Activated naive CD4-positive, alpha-beta T cell treated with anti-CD3 and anti-CD28 coated beads for 36 hours (primary cell): ENCODE measurements at regions of chr19 and their contacts with region 1.

Region 1: GRCh38 chr19:38899447-38900219 is at the starts of genes NFKBIB and SIRT2:
- DNase-seq: peak; percentile 100
- H3K4me3 Mint-ChIP-seq: peak within 1 kb of the TSS; percentile 96
- H3K27ac Mint-ChIP-seq: peak within 1 kb of the TSS; percentile 86
- H3K4me1 Mint-ChIP-seq: peaks cover 41% of the 10 kb centered on the region
- H3K27me3 Mint-ChIP-seq: no peaks in the 10 kb centered on the region
- total RNA-seq, gene NFKBIB: 47.2 to 52.7 TPM
- total RNA-seq, gene SIRT2: 18.2 to 19.6 TPM

Region 2: DNA sequence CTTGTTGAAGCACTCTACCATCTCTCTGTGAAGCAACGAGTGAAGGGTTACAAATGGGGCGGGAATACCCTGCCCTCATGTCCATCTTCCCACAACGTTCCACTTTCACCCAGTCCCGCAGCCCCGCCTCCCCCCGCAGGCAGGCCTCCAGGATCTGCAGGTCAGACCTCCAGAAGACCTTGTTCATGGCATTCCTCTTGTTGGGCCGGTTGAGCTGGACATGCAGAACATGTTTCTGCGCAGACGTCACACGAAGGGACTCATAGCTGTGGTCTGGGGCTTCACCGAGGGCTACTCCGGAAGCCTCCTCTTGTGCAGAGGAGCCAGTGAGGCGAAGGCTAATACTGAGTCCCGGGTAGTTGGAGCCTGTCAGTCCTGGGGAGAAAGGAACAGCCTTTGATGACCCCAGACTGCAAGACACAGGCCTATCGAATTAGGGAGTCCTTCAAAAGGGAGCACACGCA is 68.5 kb before region 1 on chr19:
- CTCF ChIA-PET with region 1: no interaction called
- intact Hi-C with region 1: loop called (anchors 1 kb)
- DNase-seq: peak; percentile 64
- H3K4me3 Mint-ChIP-seq: peak overlapping the region; percentile 79
- H3K27ac Mint-ChIP-seq: peak overlapping the region; percentile 94
- H3K4me1 Mint-ChIP-seq: peaks cover 34% of the 10 kb centered on the region
- H3K27me3 Mint-ChIP-seq: no peaks in the 10 kb centered on the region

Region 3: DNA sequence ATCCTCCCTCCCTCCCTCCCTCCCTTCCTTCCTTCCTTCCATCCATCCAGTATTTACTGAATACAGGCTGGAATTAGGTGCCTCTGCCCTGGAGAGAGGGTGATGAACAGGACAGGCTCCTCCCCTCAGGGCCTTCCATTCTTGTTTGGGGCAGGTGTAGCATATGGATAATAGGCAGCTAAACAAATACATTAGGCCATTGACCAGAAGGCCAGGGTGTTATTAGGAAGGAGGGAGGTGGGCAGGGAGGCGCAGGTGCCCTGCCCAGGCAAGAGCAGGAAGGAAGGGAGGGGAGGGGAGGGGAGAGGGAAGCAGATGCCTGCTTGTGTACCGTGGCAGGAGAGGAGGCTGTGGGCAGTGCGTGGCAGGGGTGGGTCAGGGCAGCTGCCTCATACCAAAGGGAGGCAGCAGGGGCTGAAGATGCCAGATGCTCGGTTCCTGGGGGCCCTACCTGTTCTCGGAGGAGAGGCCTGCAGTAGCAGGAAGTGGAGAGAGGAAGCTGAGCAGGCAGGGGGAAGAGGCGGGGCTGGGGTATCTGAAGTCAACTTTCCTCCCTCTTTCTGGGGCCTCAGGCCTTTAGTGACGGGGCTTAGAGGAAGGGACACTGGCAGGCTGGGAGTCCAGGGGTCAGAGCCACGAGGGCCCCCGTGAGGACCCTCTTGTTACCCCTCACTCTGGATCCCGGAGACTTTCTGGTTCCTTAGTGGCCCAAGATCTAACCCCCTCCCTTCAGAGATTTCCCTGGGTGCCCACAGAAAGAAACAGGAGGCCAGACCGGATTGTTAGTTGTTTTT is 21.7 kb before region 1 on chr19 and contains the start of gene RINL:
- CTCF ChIA-PET with region 1: interaction called, 3 read pairs
- intact Hi-C with region 1: loop called (anchors 1 kb)
- DNase-seq: peak; percentile 88
- H3K4me3 Mint-ChIP-seq: peak within 1 kb of the TSS; percentile 98
- H3K27ac Mint-ChIP-seq: peak within 1 kb of the TSS; percentile 99
- H3K4me1 Mint-ChIP-seq: peaks cover 29% of the 10 kb centered on the region
- H3K27me3 Mint-ChIP-seq: no peaks in the 10 kb centered on the region
- total RNA-seq, gene RINL: 107 to 117 TPM

Region 4: DNA sequence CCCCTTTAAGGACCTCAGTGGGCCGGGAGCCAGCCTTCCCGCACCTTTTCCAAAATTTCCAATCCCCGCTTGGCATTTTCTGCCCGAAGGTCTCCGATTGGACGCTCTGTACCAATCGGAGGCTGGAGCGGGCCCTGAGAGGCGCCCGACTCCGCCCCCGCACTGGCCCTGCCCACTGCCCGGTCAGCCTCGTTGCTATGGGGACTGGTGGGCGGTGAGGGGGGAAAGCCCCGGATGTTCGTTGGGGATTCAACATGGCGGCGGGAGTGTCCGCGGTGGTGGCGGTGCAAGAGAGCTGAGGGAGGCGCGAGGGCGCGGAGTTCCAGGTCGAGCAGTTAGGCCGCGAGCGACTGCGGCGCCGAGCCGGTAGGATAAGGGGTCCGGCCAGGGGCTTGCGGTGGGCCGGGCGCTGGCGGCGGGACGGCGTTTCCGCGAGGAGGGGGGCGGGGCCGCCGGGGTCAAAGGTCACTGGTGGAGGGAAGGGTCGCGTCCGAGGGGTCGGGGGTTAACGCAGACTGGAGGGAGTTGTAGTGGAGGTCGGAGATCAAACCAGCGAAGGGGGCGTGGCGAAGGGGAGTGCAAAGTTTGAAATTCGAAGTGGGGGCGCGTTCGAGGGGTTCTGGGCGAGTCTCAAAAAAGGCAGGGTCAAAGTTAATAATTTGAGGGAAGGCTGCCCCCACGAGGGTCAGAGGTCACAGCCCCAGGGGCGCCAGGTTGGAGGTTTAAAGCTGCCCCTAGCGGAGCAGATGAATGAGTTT is 226.1 kb after region 1 on chr19 and contains the start of gene PAK4:
- CTCF ChIA-PET with region 1: no interaction called
- intact Hi-C with region 1: loop called (anchors 1 kb)
- DNase-seq: peak; percentile 99
- H3K4me3 Mint-ChIP-seq: peak within 1 kb of the TSS; percentile 92
- H3K27ac Mint-ChIP-seq: peak within 1 kb of the TSS; percentile 92
- H3K4me1 Mint-ChIP-seq: peaks cover 38% of the 10 kb centered on the region
- H3K27me3 Mint-ChIP-seq: peaks cover 2% of the 10 kb centered on the region
- total RNA-seq, gene PAK4: 16.9 to 18.1 TPM